Sigmoid colon (tissue), 7 donors: ENCODE measurements at regions of chr2 and their contacts with region 1.

Region 1: GRCh38 chr2:207091176-207091575 is 74.6 kb downstream of the KLF7 start:
- DNase-seq: no peak
- H3K4me3 ChIP-seq: no peak overlapping the region
- H3K27ac ChIP-seq: peak overlapping the region in 2 of 4 donors; percentile 32 to 55
- H3K4me1 ChIP-seq: peaks cover 0 to 56% (median 41%) of the 10 kb centered on the region in 4 donors
- H3K27me3 ChIP-seq: no peaks in the 10 kb centered on the region
- CTCF ChIP-seq: no peak
- EP300 ChIP-seq: no peak
- POLR2A ChIP-seq: no peak

Region 2: DNA sequence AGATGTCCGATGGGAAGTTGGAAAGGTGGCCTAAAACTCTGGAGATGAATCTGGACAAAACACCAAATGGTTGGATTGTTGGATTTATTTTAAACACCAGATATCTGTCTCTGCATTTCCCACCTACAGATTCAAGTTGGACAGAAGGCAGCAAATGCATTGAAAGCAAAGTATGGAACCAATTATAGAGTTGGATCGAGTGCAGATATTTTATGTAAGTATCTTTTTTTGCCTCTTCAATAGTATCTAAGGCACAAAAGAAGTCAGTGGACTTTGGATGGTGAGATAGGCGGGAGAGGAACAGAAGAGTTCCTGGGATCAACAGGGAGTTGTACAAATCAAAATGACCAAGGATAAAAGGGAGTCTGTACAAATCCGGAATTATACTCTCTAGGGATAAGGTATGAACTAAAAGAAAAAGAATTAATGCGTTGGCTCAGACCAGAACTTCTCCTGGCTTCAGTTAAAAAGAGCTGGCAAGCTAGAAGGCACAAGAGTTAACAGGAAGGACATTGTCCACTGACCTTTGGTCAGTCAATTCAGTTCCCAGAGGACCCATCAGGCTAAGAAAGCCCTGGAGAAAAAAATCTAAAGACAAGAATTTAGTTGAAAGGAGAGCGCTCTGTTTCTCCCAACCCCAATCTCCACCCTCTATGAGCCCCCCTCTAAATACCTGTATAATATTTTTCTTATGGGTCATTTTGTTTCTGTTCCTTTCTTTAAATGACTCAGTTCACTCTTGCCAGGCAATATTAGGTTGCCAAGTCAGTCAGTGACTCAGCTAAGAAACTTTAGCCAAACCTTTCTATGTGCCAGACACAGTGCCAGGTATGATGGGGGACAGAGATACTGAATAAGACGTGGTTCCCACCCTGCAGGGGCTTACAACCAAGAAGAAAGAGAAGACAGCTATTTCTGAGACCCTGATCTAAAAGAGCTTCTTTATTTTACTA is 122.8 kb before region 1 on chr2:
- intact Hi-C with region 1: no loop called
- DNase-seq: no peak
- H3K4me3 ChIP-seq: no peak overlapping the region
- H3K27ac ChIP-seq: no peak overlapping the region
- H3K4me1 ChIP-seq: peaks cover 0 to 6% (median 5%) of the 10 kb centered on the region in 4 donors
- H3K27me3 ChIP-seq: no peaks in the 10 kb centered on the region
- CTCF ChIP-seq: no peak
- EP300 ChIP-seq: no peak
- POLR2A ChIP-seq: no peak

Region 3: DNA sequence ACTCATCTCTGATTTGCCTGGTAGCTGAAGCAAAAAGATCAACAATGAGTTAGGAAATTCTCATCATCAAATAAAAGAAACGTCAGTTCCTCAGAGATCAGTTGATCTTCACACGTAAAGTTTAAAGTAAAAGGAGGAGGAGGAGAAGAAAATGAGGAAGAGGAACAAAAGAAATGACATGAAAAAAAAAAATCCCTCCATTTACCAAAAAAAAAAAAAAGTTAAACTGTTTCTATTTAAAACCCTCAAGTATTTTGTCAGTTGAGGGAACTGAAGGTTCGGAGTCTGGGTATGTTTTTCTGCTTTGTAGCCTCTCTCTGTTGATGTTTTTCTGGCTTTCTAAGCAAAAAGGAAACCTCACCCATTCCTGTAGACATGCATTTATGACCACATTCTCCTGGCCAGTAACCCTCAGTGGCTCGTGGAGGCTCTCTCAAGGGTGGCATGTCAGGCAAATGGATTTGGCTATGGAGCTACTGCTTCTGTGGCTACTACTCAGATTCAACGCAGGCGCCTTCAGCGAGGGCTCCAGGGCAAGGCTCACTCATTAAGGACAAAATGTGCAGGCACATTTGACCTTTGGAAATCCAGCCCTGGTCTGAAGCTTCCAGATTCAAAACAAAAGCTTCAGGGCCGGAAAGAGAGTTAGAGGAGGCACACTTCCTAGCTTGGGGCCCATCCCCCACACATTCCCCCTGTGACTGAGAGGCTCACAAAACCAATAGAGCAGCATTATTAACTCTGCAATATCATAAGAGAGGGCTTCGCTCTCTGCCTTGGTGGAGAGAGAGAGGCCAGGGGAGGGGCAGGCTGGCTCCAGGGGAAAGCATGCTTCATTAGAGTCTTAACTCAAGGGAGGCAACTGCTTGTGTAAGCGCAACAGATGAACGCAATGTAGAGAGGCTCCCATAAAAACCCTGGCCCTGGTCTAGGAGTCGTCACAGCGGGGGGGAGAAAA is 52.3 kb after region 1 on chr2:
- intact Hi-C with region 1: loop called (anchors 5 kb)
- DNase-seq: peak; percentile 90
- H3K4me3 ChIP-seq: peak overlapping the region; percentile 2 to 31 (median 14)
- H3K27ac ChIP-seq: peak overlapping the region; percentile 78 to 100 (median 82)
- H3K4me1 ChIP-seq: peaks cover 0 to 99% (median 88%) of the 10 kb centered on the region in 4 donors
- H3K27me3 ChIP-seq: no peaks in the 10 kb centered on the region
- CTCF ChIP-seq: no peak
- EP300 ChIP-seq: no peak
- POLR2A ChIP-seq: peak in 1 of 2 donors; percentile 8

Region 4: DNA sequence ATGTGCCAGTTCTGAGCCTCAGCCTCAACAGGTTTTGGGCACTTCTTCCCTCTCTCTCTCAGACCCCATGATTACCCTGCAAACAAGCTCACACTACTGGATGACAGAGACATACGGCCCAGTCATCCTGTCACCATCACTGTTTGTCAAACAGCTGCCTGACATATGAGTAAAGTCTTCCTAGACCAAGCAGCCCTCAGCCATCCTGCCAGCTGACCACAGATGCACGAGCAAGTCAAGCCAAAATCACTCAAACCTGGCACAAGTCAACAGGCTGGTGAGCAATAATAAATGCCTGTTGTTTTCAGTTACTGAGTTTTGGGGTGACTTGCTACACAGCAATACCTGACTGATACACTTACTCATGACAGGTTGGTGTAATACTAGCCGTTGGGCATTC is 150.0 kb after region 1 on chr2:
- intact Hi-C with region 1: no loop called
- DNase-seq: no peak
- H3K4me3 ChIP-seq: no peak overlapping the region
- H3K27ac ChIP-seq: no peak overlapping the region
- H3K4me1 ChIP-seq: peaks cover 0 to 25% (median 21%) of the 10 kb centered on the region in 4 donors
- H3K27me3 ChIP-seq: no peaks in the 10 kb centered on the region
- CTCF ChIP-seq: no peak
- EP300 ChIP-seq: no peak
- POLR2A ChIP-seq: no peak